OCI-LY7 (cell line): ENCODE measurements at regions of chr1 and their contacts with region 1.

Region 1: GRCh38 chr1:100037927-100038659 is 68.3 kb downstream of the SLC35A3 start:
- DNase-seq: peak; percentile 90
- H3K4me3 ChIP-seq: peak overlapping the region; percentile 78
- H3K27ac ChIP-seq: peak overlapping the region; percentile 84
- H3K4me1 ChIP-seq: peaks cover 50% of the 10 kb centered on the region
- CTCF ChIP-seq: no peak

Region 2: GRCh38 chr1:99849744-99850458 is 188.2 kb before region 1 on chr1 and contains the start of gene AGL:
- CTCF ChIA-PET with region 1: no interaction called
- POLR2A ChIA-PET with region 1: interaction called, 6 read pairs
- intact Hi-C with region 1: loop called (anchors 2 kb)
- DNase-seq: peak; percentile 93
- H3K4me3 ChIP-seq: peak within 1 kb of the TSS; percentile 81
- H3K27ac ChIP-seq: peak within 1 kb of the TSS; percentile 56
- H3K4me1 ChIP-seq: peaks cover 30% of the 10 kb centered on the region
- CTCF ChIP-seq: no peak
- total RNA-seq, gene AGL: 11.6 and 12.2 TPM in 2 replicates

Region 3: GRCh38 chr1:99886841-99887240 is 151.3 kb before region 1 on chr1:
- CTCF ChIA-PET with region 1: no interaction called
- POLR2A ChIA-PET with region 1: no interaction called
- intact Hi-C with region 1: no loop called
- DNase-seq: no peak
- H3K4me3 ChIP-seq: no peak overlapping the region
- H3K27ac ChIP-seq: no peak overlapping the region
- H3K4me1 ChIP-seq: no peaks in the 10 kb centered on the region
- CTCF ChIP-seq: no peak

Region 4: DNA sequence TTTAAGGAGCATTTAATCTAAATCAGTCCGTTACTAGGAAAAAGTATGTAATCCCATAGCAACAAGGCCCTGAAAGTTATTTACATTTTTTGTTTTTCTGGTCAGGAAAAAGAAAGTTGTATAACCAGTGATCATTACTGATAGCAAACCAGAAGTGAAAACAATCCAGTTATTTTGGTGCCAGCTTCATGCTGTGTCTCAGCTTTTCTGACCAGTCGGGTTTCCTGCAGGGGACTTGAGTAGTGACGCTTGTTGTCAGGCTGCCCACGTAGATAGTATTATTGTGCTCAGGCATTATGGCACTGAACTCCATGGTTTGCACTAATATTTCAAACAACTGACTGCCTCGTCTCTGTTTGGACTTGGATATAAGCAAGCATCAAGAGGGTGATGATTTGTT is 39.4 kb after region 1 on chr1:
- CTCF ChIA-PET with region 1: no interaction called
- POLR2A ChIA-PET with region 1: interaction called, 10 read pairs
- intact Hi-C with region 1: no loop called
- DNase-seq: no peak
- H3K4me3 ChIP-seq: no peak overlapping the region
- H3K27ac ChIP-seq: no peak overlapping the region
- H3K4me1 ChIP-seq: no peaks in the 10 kb centered on the region
- CTCF ChIP-seq: no peak

Region 5: GRCh38 chr1:100107696-100108095 is 69.6 kb after region 1 on chr1:
- CTCF ChIA-PET with region 1: no interaction called
- POLR2A ChIA-PET with region 1: no interaction called
- intact Hi-C with region 1: no loop called
- DNase-seq: no peak
- H3K4me3 ChIP-seq: no peak overlapping the region
- H3K27ac ChIP-seq: no peak overlapping the region
- H3K4me1 ChIP-seq: peaks cover 7% of the 10 kb centered on the region
- CTCF ChIP-seq: no peak

Region 6: DNA sequence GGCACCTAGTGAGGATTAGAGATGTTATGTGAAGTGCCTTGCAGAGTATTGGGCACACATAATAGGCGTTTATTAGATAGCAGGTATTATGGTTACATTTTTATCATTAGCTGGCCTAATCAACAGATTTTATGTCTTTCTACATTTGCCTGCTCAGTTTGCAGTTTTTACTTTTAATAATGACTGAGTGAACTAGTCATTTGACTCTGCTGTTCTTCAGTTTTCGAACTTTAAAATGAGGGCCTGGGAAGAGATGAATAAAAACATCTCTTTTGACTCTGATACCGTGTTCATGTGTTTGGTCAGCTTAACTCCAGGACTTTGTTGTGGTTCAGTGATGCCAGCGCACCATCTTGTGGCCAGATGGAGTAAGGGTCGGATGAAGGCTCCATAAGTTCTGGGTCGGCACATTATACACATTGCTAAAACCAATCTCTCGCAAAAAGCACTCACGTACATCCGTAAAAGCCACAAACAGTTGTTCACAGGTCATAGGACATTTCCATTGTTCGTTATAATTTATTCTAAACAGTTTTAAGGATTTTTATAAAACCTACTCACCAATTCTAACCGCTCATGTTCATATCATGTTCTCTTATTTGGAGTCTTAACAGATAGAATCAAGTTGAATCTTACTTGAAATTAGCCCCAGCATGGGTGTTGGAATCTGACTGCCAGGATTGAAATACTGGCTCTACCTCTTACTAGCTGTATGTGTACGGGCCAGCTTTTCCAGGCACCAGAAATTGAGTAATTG is 421.4 kb after region 1 on chr1:
- CTCF ChIA-PET with region 1: no interaction called
- POLR2A ChIA-PET with region 1: no interaction called
- intact Hi-C with region 1: loop called (anchors 5 kb)
- DNase-seq: peak; percentile 74
- H3K4me3 ChIP-seq: no peak overlapping the region
- H3K27ac ChIP-seq: no peak overlapping the region
- H3K4me1 ChIP-seq: peaks cover 8% of the 10 kb centered on the region
- CTCF ChIP-seq: peak; percentile 97